PC-3 (cell line): ENCODE measurements at regions of chr1 and their contacts with region 1.

Region 1: GRCh38 chr1:26719204-26719603 is 23.4 kb downstream of the ARID1A start:
- DNase-seq: no peak
- ATAC-seq: peak; percentile 18; the same call in 1 of the 2 replicates
- H3K4me3 ChIP-seq: no peak overlapping the region
- H3K27ac ChIP-seq: no peak overlapping the region
- H3K4me1 ChIP-seq: peaks cover 22% of the 10 kb centered on the region
- H3K27me3 ChIP-seq: no peaks in the 10 kb centered on the region
- CTCF ChIP-seq: peak; percentile 38; the same call in 1 of the 2 replicates

Region 2: GRCh38 chr1:26705788-26706311 is 13.4 kb before region 1 on chr1:
- CTCF ChIA-PET with region 1: interaction called, 5 read pairs
- POLR2A ChIA-PET with region 1: no interaction called
- intact Hi-C with region 1: loop called (anchors 2 kb)
- DNase-seq: peak; percentile 98
- ATAC-seq: peak; percentile 89
- H3K4me3 ChIP-seq: peak overlapping the region; percentile 24; the same call in 1 of the 2 replicates
- H3K27ac ChIP-seq: peak overlapping the region; percentile 87
- H3K4me1 ChIP-seq: peaks cover 68% of the 10 kb centered on the region
- H3K27me3 ChIP-seq: no peaks in the 10 kb centered on the region
- CTCF ChIP-seq: no peak